Activated CD4-positive, alpha-beta memory T cell treated with anti-CD3 and anti-CD28 coated beads for 36 hours (primary cell): ENCODE measurements at regions of chr10 and their contacts with region 1.

Region 1: GRCh38 chr10:104925232-104925851 is 284.3 kb downstream of the SORCS3 start:
- DNase-seq: peak; percentile 31
- H3K4me3 Mint-ChIP-seq: no peak overlapping the region
- H3K27ac Mint-ChIP-seq: no peak overlapping the region
- H3K4me1 Mint-ChIP-seq: no peaks in the 10 kb centered on the region
- H3K27me3 Mint-ChIP-seq: no peaks in the 10 kb centered on the region

Region 2: DNA sequence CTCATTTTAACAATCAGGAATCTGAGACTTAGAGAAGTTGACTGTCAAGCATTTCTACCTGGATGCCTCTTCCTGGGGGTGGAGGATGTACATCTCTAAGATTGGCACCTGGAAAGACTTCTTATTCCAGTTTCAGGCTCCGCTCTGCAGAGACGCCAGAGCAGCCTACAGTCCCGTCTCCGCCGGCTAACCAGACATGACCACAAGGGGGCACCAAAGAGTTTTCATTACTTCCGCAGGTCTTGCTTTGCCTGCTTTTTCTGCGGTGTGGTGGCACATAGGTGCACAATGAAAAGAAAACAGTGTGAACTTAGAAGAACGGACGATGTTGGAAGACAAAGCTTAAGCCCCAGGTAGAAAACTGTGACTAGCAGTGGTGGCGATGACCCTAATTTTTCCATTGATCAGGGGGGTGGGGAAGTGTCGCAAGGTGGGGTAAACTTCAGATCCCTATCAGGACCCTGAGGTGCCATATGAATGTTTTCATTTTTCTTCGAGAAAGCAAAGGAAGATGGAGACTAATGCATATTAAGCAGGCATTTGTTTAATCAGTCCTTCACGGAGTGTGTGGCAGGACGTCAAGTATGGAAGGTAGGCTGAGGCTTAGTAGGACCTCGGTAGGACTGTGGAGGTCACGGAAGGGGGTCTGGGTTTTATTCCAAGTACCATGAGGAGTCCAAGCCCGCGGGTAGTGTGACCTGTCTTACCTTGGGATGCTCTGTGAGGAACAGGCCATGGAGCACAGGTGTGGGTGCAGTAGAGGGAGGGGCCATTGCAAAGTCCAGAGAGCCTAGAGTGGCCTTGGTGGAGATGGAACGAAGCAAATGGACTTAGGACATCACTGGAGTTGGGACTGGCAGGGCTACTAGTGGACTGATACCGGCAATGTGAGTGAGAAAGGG is 344.3 kb before region 1 on chr10:
- CTCF ChIA-PET with region 1: no interaction called
- POLR2A ChIA-PET with region 1: no interaction called
- intact Hi-C with region 1: loop called (anchors 5 kb)
- DNase-seq: peak; percentile 76
- H3K4me3 Mint-ChIP-seq: no peak overlapping the region
- H3K27ac Mint-ChIP-seq: no peak overlapping the region
- H3K4me1 Mint-ChIP-seq: peaks cover 7% of the 10 kb centered on the region
- H3K27me3 Mint-ChIP-seq: peaks cover 16% of the 10 kb centered on the region

Region 3: GRCh38 chr10:104638861-104639589 is 286.3 kb before region 1 on chr10:
- CTCF ChIA-PET with region 1: no interaction called
- POLR2A ChIA-PET with region 1: no interaction called
- intact Hi-C with region 1: loop called (anchors 2 kb)
- DNase-seq: no peak
- H3K4me3 Mint-ChIP-seq: no peak overlapping the region
- H3K27ac Mint-ChIP-seq: no peak overlapping the region
- H3K4me1 Mint-ChIP-seq: no peaks in the 10 kb centered on the region
- H3K27me3 Mint-ChIP-seq: peaks cover 52% of the 10 kb centered on the region